ENCODE measurements at regions of chr3 and their contacts with region 1.

Region 1: GRCh38 chr3:136861890-136862616 is at the start of gene NCK1:
- DNase-seq: peak; percentile 99
- ATAC-seq: peak; percentile 99
- H3K4me3 Mint-ChIP-seq: peak within 1 kb of the TSS; percentile 92
- H3K27ac Mint-ChIP-seq: peak within 1 kb of the TSS; percentile 96
- H3K4me1 Mint-ChIP-seq: peaks cover 49% of the 10 kb centered on the region
- H3K27me3 Mint-ChIP-seq: no peaks in the 10 kb centered on the region
- total RNA-seq, gene NCK1: 36.3 to 39.1 TPM

Region 2: GRCh38 chr3:136396916-136397315 is 465.1 kb before region 1 on chr3:
- CTCF ChIA-PET with region 1: no interaction called
- POLR2A ChIA-PET with region 1: no interaction called
- DNase-seq: no peak
- ATAC-seq: no peak
- H3K4me3 Mint-ChIP-seq: no peak overlapping the region
- H3K27ac Mint-ChIP-seq: peak overlapping the region; percentile 34
- H3K4me1 Mint-ChIP-seq: no peaks in the 10 kb centered on the region
- H3K27me3 Mint-ChIP-seq: no peaks in the 10 kb centered on the region

Region 3: GRCh38 chr3:136838641-136839555 is 23.2 kb before region 1 on chr3:
- CTCF ChIA-PET with region 1: interaction called, 5 read pairs
- POLR2A ChIA-PET with region 1: interaction called, 12 read pairs
- DNase-seq: no peak
- ATAC-seq: no peak
- H3K4me3 Mint-ChIP-seq: no peak overlapping the region
- H3K27ac Mint-ChIP-seq: no peak overlapping the region
- H3K4me1 Mint-ChIP-seq: peaks cover 18% of the 10 kb centered on the region
- H3K27me3 Mint-ChIP-seq: no peaks in the 10 kb centered on the region

Region 4: DNA sequence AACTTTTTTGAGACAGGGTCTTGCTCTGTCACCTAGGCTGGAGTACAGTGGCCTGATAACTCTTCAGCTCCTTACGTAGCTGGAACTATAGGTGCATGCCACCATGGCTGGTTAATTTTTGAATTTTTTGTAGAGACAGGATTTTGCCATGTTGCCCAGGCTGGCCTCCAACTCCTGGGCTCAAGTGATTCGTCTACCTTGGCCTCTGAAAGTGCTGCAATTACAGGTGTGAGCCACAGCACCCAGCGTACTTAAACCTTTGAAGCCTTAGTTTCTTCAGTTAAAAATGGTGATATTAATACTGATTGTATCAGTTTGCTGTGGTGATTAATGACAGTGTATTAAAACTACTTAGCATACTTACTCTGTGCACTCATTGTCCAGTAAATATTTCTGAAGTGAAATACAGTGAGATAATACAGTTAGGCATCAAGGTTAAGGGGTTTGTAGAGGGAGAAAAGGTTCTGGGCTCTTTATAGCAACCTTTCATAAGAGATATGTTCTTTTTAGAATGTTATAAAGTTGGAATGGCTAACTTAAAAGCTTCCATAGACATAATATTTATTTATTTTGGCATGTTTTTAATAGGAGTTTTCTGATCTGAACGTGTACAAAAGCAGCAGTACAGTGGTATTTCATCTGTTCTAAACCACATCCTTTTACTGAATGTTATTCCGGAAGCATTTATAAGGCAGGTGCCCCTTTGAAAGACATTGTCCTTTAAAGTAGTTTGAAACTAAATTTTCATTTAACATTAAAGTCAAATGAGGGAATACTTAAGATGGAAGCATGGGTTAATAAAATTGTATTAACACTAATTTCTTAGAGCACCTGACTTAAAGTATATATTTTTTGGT is 23.5 kb after region 1 on chr3:
- CTCF ChIA-PET with region 1: interaction called, 12 read pairs
- POLR2A ChIA-PET with region 1: interaction called, 17 read pairs
- DNase-seq: no peak
- ATAC-seq: peak; percentile 81
- H3K4me3 Mint-ChIP-seq: peak overlapping the region; percentile 56
- H3K27ac Mint-ChIP-seq: peak overlapping the region; percentile 88
- H3K4me1 Mint-ChIP-seq: peaks cover 54% of the 10 kb centered on the region
- H3K27me3 Mint-ChIP-seq: no peaks in the 10 kb centered on the region

Region 5: DNA sequence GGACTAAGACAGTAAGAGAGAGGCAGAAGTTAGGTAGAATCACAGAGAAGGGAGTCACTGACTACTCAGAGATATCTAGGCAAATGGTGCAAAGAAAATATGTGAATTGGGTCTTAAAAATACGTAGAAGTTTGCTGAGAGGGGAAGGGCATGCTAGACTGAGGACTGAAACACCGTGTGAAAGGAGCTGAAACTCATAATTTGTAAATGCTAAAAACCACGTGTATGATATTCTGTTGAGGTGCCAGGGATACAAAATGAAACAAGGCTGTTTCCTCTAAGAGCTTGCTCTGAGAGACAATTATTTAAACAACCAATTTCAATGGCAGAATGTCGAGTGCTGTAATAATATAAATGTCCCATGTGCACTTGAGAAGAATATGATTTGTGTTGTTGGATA is 47.1 kb after region 1 on chr3:
- CTCF ChIA-PET with region 1: interaction called, 14 read pairs
- POLR2A ChIA-PET with region 1: no interaction called
- DNase-seq: no peak
- ATAC-seq: no peak
- H3K4me3 Mint-ChIP-seq: peak overlapping the region; percentile 9
- H3K27ac Mint-ChIP-seq: no peak overlapping the region
- H3K4me1 Mint-ChIP-seq: peaks cover 43% of the 10 kb centered on the region
- H3K27me3 Mint-ChIP-seq: no peaks in the 10 kb centered on the region

Measured in activated CD8-positive, alpha-beta T cell treated with anti-CD3 and anti-CD28 coated beads, Interleukin-2, amount 10 ng/mL, durations not matched to agents 7 days and 5 days (primary cell).